CD8-positive, alpha-beta T cell (primary cell): ENCODE measurements at regions of chr15 and their contacts with region 1.

Region 1: DNA sequence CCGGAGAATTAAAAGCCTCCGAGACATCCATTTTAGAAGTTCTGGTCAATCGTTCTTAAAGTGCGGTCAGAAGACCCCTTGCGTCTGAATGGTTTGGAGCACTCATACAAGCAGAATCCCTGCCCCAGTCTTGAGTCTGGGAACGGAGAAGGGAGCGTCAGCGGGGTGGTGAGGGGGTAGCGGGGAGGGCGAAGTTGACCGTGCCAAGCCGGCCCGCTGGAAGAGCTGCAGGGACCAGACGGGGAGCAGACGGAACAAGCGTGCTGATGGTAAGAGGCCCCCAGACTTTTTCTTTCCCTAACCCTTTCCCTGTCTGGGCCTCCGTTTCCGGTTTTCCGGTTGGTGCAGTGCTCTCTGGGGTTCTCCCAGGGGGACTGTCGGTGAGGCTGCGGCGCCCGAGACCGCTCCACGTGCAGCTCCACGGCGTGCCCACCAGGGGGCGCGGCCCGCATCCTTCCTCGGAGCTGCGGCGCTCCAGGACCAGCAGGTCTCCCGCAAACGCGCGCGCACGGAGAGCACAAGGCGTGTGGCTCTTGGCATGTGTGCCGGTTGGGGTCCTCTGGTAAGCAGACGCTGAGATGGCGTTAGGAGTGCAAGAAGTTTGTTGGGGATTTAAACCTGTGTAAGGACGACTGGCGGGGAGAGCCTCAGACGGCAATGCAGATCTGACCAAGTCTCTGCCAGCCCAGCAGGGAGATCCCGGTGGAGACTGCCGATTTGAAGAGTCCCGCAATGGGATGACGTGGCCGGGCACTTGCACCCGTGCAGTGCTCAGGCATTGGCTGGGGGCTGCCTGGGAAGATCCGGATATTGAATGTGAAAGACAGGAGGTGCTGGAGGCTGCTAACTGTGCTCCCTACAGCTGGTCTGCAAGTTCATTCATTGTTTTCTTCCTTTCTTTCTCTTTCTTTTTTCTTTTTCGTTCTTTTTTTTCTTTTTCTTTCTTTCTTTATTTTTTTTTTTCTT is 19.2 kb upstream of the CORO2B start:
- DNase-seq: peak; percentile 50 to 84 (median 70)
- ATAC-seq: peak; percentile 95
- H3K4me3 ChIP-seq: peak overlapping the region; percentile 30 to 66
- H3K4me3 Mint-ChIP-seq: peak overlapping the region; percentile 75
- H3K27ac ChIP-seq: no peak overlapping the region
- H3K27ac Mint-ChIP-seq: no peak overlapping the region
- H3K4me1 ChIP-seq: peaks cover 8% of the 10 kb centered on the region
- H3K4me1 Mint-ChIP-seq: peaks cover 18% of the 10 kb centered on the region
- H3K27me3 ChIP-seq: peaks cover 0 to 15% of the 10 kb centered on the region in 2 experiments
- H3K27me3 Mint-ChIP-seq: peaks cover 49% of the 10 kb centered on the region
- CTCF ChIP-seq: peak; percentile 92

Region 2: DNA sequence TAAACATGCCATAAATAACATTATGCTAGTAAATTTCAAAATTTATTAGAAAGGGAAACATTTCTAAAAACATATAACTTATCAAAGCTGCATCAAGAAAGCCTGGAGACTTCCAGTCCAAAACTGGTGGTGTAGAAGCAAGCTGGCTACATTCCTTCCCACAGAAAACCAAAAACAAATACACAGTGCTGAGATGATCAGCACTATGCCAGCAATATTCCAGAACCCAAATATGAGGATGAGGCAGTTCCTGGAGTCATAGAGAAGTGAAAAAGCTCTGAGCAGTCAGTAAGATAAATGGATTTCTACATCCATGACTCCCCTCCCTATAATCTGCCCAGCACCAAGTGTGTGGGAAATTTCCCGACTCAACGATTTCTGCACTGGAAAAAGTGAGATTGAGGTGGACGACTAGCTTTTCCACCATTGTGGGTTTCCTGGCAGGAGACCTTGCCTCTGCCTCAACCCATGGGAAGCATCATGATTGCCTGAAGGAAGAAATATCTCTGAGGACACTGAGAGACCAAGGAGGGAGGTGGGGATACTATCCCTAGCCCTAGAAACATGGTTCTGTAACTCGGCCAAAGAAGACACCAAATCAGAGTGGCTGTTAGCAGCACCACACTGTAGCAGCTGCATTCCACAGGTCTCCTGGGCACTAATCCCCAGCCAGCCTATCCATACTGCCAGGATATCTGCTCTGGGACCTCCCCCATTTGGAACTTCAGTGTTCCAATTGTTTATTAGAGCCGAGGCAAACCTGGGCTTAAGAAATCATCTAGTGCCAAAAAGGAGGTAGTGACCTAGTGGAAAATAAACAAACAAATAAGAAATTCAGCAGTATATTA is 318.3 kb before region 1 on chr15:
- CTCF ChIA-PET with region 1: no interaction called
- POLR2A ChIA-PET with region 1: no interaction called
- intact Hi-C with region 1: no loop called
- DNase-seq: no peak
- ATAC-seq: no peak
- H3K4me3 ChIP-seq: no peak overlapping the region
- H3K4me3 Mint-ChIP-seq: no peak overlapping the region
- H3K27ac ChIP-seq: no peak overlapping the region
- H3K27ac Mint-ChIP-seq: no peak overlapping the region
- H3K4me1 ChIP-seq: no peaks in the 10 kb centered on the region
- H3K4me1 Mint-ChIP-seq: no peaks in the 10 kb centered on the region
- H3K27me3 ChIP-seq: no peaks in the 10 kb centered on the region
- H3K27me3 Mint-ChIP-seq: peaks cover 4% of the 10 kb centered on the region
- CTCF ChIP-seq: no peak

Region 3: DNA sequence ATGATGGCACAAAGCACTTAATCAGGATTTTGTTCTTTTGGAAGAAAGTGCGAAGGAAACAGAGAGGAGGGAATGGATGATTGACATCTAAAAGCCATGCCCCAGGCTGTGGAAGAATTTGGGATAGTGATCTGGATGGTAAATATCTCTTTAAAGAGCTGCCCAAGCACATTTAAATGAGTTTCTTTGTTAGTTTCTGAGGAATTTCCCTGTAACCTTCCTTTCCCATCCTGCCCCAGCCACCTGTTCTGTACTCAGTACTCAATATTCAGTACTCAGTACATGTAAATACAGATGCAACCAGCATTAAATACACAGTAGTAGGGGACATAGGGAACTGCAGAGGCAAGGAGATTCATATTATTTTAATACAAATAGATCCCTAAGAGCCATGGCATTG is 11.3 kb after region 1 on chr15:
- CTCF ChIA-PET with region 1: interaction called, 14 read pairs
- POLR2A ChIA-PET with region 1: interaction called, 4 read pairs
- intact Hi-C with region 1: no loop called
- DNase-seq: no peak
- ATAC-seq: no peak
- H3K4me3 ChIP-seq: no peak overlapping the region
- H3K4me3 Mint-ChIP-seq: no peak overlapping the region
- H3K27ac ChIP-seq: no peak overlapping the region
- H3K27ac Mint-ChIP-seq: no peak overlapping the region
- H3K4me1 ChIP-seq: no peaks in the 10 kb centered on the region
- H3K4me1 Mint-ChIP-seq: no peaks in the 10 kb centered on the region
- H3K27me3 ChIP-seq: peaks cover 0 to 2% of the 10 kb centered on the region in 2 experiments
- H3K27me3 Mint-ChIP-seq: peaks cover 57% of the 10 kb centered on the region
- CTCF ChIP-seq: no peak

Region 4: DNA sequence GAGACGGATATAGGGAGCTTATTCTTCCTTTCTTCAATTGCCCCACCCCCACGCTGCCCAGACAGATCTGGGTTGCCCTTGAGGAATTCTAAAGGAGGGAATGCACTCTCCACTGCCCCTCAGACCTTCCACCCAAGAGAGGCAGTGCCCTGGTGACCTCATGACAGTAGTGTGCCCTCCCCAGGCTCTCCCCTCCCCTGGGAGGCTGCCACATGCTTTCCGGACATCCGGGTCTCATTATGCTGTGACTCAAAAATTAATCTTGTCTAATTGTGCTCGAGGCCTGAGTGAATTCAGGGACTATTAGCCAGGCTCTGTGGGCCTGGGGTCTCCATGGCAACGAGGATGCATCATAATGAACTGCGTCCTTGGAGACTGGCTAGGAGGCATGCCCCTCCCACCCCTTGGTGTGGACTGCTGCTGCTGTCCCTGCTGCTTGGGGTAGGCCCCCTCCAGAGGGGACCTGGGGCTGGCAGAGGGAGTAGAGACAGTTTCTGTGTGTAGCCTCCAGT is 40.0 kb after region 1 on chr15:
- CTCF ChIA-PET with region 1: no interaction called
- POLR2A ChIA-PET with region 1: no interaction called
- intact Hi-C with region 1: no loop called
- DNase-seq: no peak
- ATAC-seq: no peak
- H3K4me3 ChIP-seq: no peak overlapping the region
- H3K4me3 Mint-ChIP-seq: no peak overlapping the region
- H3K27ac ChIP-seq: no peak overlapping the region
- H3K27ac Mint-ChIP-seq: no peak overlapping the region
- H3K4me1 ChIP-seq: no peaks in the 10 kb centered on the region
- H3K4me1 Mint-ChIP-seq: no peaks in the 10 kb centered on the region
- H3K27me3 ChIP-seq: no peaks in the 10 kb centered on the region
- H3K27me3 Mint-ChIP-seq: peaks cover 3% of the 10 kb centered on the region
- CTCF ChIP-seq: no peak

Region 5: DNA sequence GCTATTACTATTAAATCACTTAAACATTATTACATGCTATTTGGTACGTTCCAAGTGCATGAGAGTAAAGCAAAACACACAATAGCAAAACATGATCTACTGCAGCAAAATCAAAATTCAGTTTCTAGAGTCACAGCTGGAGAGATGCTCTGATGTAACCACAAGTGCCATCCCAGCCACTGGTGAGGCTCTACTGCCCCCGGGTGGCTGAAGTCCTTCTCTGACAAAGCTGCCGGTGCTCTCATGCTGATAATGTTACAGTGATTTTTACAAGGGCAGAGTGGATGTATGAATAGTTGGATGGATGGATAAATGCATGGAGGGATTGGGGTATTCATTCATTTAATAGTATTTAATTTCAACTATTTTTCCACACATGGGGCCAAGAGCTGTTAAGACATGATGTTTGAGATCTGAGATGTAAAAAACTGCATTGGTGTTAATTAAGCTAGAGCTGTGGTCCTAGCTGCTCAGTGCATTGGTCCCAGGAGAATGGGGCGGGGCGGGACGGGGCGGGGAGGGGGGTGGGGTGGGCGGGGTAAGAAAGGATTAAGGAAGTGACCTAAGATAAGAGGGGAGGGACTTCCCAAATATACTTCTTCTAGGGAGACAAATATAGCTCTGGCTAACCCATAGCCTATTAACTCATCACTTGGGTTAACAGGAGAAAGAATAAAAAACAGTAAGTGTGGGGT is 365.4 kb after region 1 on chr15:
- CTCF ChIA-PET with region 1: interaction called, 3 read pairs
- POLR2A ChIA-PET with region 1: no interaction called
- intact Hi-C with region 1: loop called (anchors 1 to 2 kb)
- DNase-seq: peak; percentile 16 to 64 (median 56)
- ATAC-seq: no peak
- H3K4me3 ChIP-seq: no peak overlapping the region
- H3K4me3 Mint-ChIP-seq: no peak overlapping the region
- H3K27ac ChIP-seq: no peak overlapping the region
- H3K27ac Mint-ChIP-seq: no peak overlapping the region
- H3K4me1 ChIP-seq: no peaks in the 10 kb centered on the region
- H3K4me1 Mint-ChIP-seq: no peaks in the 10 kb centered on the region
- H3K27me3 ChIP-seq: no peaks in the 10 kb centered on the region
- H3K27me3 Mint-ChIP-seq: peaks cover 15% of the 10 kb centered on the region
- CTCF ChIP-seq: peak; percentile 62